Activated CD4-positive, alpha-beta memory T cell treated with anti-CD3 and anti-CD28 coated beads for 36 hours (primary cell): ENCODE measurements at regions of chr3 and their contacts with region 1.

Region 1: DNA sequence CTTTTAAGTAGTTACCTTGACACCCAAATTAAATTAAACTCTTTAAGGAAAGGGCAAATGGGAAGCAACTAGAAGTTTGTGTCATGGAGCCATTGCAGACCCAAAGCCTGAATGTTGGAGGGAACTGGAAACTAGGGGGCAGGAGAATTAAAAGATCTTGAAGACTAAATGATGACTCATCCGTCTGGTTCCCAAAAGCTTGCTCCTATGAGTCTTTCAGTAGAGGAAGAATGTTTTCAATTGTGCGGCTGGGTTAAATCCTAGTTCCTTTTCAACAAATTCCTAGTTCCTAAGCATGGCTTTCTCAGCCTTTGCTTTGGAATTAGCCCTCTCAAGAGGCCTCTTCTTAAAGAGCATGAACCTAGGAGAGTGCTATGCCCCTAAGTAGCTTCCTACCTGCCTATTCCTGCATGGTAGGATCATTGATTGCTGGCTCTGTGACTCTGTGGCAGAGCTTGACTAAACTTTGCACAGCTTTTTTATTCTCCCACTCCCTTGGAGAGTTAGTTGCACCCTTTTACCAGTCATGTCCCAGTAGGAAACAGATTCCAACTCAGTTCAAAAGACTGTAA is 17.7 kb downstream of the CLEC3B start:
- DNase-seq: no peak
- H3K4me3 Mint-ChIP-seq: no peak overlapping the region
- H3K27ac Mint-ChIP-seq: no peak overlapping the region
- H3K4me1 Mint-ChIP-seq: peaks cover 16% of the 10 kb centered on the region
- H3K27me3 Mint-ChIP-seq: peaks cover 10% of the 10 kb centered on the region

Region 2: DNA sequence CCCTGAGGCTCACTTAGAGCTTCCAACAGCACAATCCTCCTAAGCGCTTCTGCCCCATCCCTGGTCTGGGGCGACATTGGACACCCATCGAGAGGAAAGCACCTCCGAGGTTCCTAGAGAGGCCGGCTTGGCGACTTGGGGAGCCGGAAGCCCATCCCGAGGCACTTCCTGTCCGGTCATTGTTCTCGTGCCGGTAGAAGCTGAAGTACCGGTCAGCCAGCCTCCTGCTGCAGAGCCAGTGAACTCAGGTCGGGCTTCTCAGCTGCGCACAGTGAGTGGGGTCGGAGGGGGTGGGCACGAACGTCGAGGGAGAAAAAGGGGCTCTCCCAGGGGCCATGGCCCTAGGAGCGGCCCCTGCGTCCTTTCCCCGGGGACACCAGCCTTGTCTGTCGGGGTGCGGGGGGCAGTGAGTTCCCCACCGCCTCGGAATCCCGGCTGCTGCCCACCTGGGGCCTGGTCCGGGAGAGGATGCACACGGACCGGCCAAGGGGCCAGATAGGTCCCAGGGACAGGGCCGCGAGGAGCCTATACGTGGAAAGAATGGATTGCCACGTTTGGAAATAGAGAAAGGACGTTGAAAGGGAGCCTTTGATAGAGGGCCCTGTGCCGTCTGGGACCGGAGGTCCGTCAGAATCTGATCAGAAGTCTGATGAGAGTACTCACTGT is 395.1 kb before region 1 on chr3 and contains the start of gene ZNF35:
- CTCF ChIA-PET with region 1: no interaction called
- POLR2A ChIA-PET with region 1: no interaction called
- intact Hi-C with region 1: no loop called
- DNase-seq: peak; percentile 66
- H3K4me3 Mint-ChIP-seq: peak within 1 kb of the TSS; percentile 80
- H3K27ac Mint-ChIP-seq: no peak within 1 kb of the TSS
- H3K4me1 Mint-ChIP-seq: peaks cover 11% of the 10 kb centered on the region
- H3K27me3 Mint-ChIP-seq: no peaks in the 10 kb centered on the region
- total RNA-seq, gene ZNF35: 3.2 TPM

Region 3: DNA sequence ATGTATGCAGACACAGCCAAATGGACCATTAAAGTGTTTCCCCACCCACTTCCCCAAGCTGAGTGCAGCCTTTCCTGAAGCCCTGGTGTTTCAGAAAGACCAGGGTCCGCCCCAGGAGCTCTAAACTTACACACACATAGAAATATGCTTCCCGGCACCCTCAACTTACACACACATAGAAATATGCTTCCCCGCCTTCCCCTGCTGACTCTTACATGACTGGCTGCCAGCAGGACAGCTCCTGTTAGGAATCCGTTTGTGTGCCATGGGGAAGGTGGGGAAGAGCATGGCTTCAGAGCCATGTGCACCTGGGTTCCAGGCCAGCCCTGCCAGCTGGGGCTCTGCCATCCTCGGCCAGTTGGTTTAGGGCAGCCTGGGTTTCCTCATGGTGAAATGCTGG is 14.2 kb before region 1 on chr3:
- CTCF ChIA-PET with region 1: interaction called, 12 read pairs
- POLR2A ChIA-PET with region 1: no interaction called
- intact Hi-C with region 1: no loop called
- DNase-seq: no peak
- H3K4me3 Mint-ChIP-seq: no peak overlapping the region
- H3K27ac Mint-ChIP-seq: no peak overlapping the region
- H3K4me1 Mint-ChIP-seq: peaks cover 2% of the 10 kb centered on the region
- H3K27me3 Mint-ChIP-seq: peaks cover 8% of the 10 kb centered on the region

Region 4: GRCh38 chr3:45105855-45106671 is 62.2 kb after region 1 on chr3:
- CTCF ChIA-PET with region 1: interaction called, 8 read pairs
- POLR2A ChIA-PET with region 1: no interaction called
- intact Hi-C with region 1: loop called (anchors 2 kb)
- DNase-seq: peak; percentile 85
- H3K4me3 Mint-ChIP-seq: no peak overlapping the region
- H3K27ac Mint-ChIP-seq: peak overlapping the region; percentile 54
- H3K4me1 Mint-ChIP-seq: peaks cover 64% of the 10 kb centered on the region
- H3K27me3 Mint-ChIP-seq: peaks cover 10% of the 10 kb centered on the region

Region 5: DNA sequence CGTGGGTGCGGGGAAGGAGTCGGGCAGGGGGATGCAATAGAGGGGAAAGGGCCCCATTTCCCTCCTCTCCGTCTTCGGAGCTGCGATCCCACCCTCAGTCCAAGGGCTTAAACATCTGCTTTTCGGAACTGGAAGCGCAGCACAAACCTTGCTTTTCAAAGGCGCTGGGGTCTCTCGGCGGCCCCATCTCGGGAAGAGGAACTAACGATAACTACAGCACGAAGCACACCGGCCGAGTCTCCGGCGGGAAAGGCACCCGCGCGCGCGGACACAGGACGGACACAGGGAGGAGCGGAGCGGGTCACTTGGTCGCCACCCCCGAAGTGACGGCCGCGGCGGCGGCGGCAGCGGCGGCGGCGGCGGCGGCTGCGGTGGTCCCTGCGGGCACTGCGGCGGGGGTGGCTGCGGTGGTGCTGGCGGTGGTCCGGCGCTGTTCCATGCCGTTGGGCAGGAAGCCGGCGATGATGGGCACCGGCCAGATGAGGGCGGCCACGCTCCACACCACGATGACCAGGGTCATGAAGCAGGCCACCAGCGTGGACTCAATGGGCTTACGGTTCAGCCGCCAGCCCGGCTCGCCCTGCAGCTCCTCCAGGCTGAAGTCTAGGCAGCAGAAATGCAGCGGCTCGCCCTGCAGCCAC is 181.1 kb after region 1 on chr3:
- CTCF ChIA-PET with region 1: interaction called, 23 read pairs
- POLR2A ChIA-PET with region 1: no interaction called
- intact Hi-C with region 1: loop called (anchors 5 kb)
- DNase-seq: peak; percentile 61
- H3K4me3 Mint-ChIP-seq: peak overlapping the region; percentile 65
- H3K27ac Mint-ChIP-seq: no peak overlapping the region
- H3K4me1 Mint-ChIP-seq: peaks cover 14% of the 10 kb centered on the region
- H3K27me3 Mint-ChIP-seq: peaks cover 68% of the 10 kb centered on the region

Region 6: GRCh38 chr3:45546716-45547701 is 503.2 kb after region 1 on chr3:
- CTCF ChIA-PET with region 1: interaction called, 17 read pairs
- POLR2A ChIA-PET with region 1: no interaction called
- intact Hi-C with region 1: no loop called
- DNase-seq: peak; percentile 56
- H3K4me3 Mint-ChIP-seq: no peak overlapping the region
- H3K27ac Mint-ChIP-seq: no peak overlapping the region
- H3K4me1 Mint-ChIP-seq: peaks cover 3% of the 10 kb centered on the region
- H3K27me3 Mint-ChIP-seq: no peaks in the 10 kb centered on the region